Activated T-helper 2 cell treated with anti-CD3 and anti-CD28 coated beads, Interferon-gamma antibody, Interleukin-2, Interleukin-4, amounts not matched to agents 10 μg/mL and 5 μg/mL and 100 μg/mL, durations not matched to agents 14 hours and 24 hours and 36 hours (primary cell): ENCODE measurements at regions of chr7 and their contacts with region 1.

Region 1: GRCh38 chr7:92731335-92732063 is 104.9 kb downstream of the CDK6 start:
- DNase-seq: no peak
- H3K4me3 Mint-ChIP-seq: peak overlapping the region; percentile 34
- H3K27ac Mint-ChIP-seq: peak overlapping the region; percentile 96
- H3K4me1 Mint-ChIP-seq: peaks cover 74% of the 10 kb centered on the region
- H3K27me3 Mint-ChIP-seq: no peaks in the 10 kb centered on the region

Region 2: GRCh38 chr7:92528188-92528957 is 203.1 kb before region 1 on chr7 and contains the starts of genes PEX1 and RBM48:
- intact Hi-C with region 1: loop called (anchors 1 kb)
- DNase-seq: peak; percentile 96
- H3K4me3 Mint-ChIP-seq: peak within 1 kb of the TSS; percentile 92
- H3K27ac Mint-ChIP-seq: peak within 1 kb of the TSS; percentile 95
- H3K4me1 Mint-ChIP-seq: peaks cover 20% of the 10 kb centered on the region
- H3K27me3 Mint-ChIP-seq: no peaks in the 10 kb centered on the region
- total RNA-seq, gene PEX1: 15.1 TPM in 2 replicates
- total RNA-seq, gene RBM48: 15.2 and 16.8 TPM in 2 replicates

Region 3: GRCh38 chr7:92584996-92585395 is 146.5 kb before region 1 on chr7:
- intact Hi-C with region 1: no loop called
- DNase-seq: no peak
- H3K4me3 Mint-ChIP-seq: no peak overlapping the region
- H3K27ac Mint-ChIP-seq: no peak overlapping the region
- H3K4me1 Mint-ChIP-seq: peaks cover 41% of the 10 kb centered on the region
- H3K27me3 Mint-ChIP-seq: no peaks in the 10 kb centered on the region

Region 4: GRCh38 chr7:92633211-92633906 is 98.1 kb before region 1 on chr7:
- intact Hi-C with region 1: loop called (anchors 1 kb)
- DNase-seq: no peak
- H3K4me3 Mint-ChIP-seq: peak overlapping the region; percentile 43
- H3K27ac Mint-ChIP-seq: peak overlapping the region; percentile 96
- H3K4me1 Mint-ChIP-seq: peaks cover 70% of the 10 kb centered on the region
- H3K27me3 Mint-ChIP-seq: no peaks in the 10 kb centered on the region

Region 5: GRCh38 chr7:92682903-92683539 is 48.5 kb before region 1 on chr7:
- intact Hi-C with region 1: loop called (anchors 1 kb)
- DNase-seq: no peak
- H3K4me3 Mint-ChIP-seq: peak overlapping the region; percentile 60
- H3K27ac Mint-ChIP-seq: peak overlapping the region; percentile 93
- H3K4me1 Mint-ChIP-seq: peaks cover 84% of the 10 kb centered on the region
- H3K27me3 Mint-ChIP-seq: no peaks in the 10 kb centered on the region

Region 6: GRCh38 chr7:92717993-92718716 is 13.3 kb before region 1 on chr7:
- intact Hi-C with region 1: loop called (anchors 1 kb)
- DNase-seq: peak; percentile 71
- H3K4me3 Mint-ChIP-seq: peak overlapping the region; percentile 80
- H3K27ac Mint-ChIP-seq: peak overlapping the region; percentile 97
- H3K4me1 Mint-ChIP-seq: peaks cover 66% of the 10 kb centered on the region
- H3K27me3 Mint-ChIP-seq: no peaks in the 10 kb centered on the region

Region 7: DNA sequence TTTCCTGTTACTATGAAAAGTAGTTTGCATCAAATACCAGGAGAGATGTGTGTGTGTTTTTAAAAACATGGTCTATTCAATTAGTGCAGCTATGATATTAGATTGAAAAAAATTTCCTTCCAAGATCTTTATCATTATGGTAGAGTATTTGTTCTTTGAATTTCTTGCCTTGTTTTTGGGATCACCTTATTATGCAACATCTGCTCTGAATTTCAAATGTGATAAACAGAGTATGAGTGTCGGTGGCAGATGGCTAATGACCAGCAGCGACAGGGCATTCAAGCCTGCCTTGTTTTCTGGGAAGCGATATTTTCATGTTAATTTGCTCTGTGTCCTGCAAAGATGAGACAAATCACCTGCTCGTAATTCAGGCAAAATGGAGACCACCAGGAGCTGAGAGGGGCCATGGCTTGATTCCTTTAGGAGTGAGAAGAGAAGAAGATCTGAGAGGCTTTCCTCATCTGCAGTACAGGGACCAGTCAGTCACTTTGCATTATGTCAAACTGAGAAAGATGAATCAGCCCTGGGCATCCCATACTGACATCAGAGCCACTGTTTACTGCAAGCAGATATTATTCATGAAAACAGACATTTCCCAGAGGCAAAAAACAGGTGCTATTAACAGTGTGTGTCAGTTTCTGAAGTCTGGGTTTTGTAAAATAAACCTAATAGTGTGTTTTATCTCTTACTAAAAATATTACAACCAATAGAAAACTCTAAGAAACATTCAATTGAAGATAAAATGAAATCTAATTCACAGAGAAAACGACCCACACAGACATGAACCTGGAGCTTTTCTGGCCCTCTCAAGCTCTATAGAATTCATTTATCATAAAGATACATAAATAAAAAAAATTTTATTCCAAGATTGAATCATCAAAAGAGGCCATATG is 37.2 kb after region 1 on chr7:
- intact Hi-C with region 1: loop called (anchors 1 kb)
- DNase-seq: no peak
- H3K4me3 Mint-ChIP-seq: peak overlapping the region; percentile 11
- H3K27ac Mint-ChIP-seq: peak overlapping the region; percentile 83
- H3K4me1 Mint-ChIP-seq: peaks cover 64% of the 10 kb centered on the region
- H3K27me3 Mint-ChIP-seq: no peaks in the 10 kb centered on the region

Region 8: GRCh38 chr7:93117852-93118530 is 386.5 kb after region 1 on chr7 and contains the start of gene SAMD9:
- intact Hi-C with region 1: loop called (anchors 5 kb)
- DNase-seq: peak; percentile 58
- H3K4me3 Mint-ChIP-seq: peak within 1 kb of the TSS; percentile 85
- H3K27ac Mint-ChIP-seq: peak within 1 kb of the TSS; percentile 90
- H3K4me1 Mint-ChIP-seq: peaks cover 38% of the 10 kb centered on the region
- H3K27me3 Mint-ChIP-seq: no peaks in the 10 kb centered on the region
- total RNA-seq, gene SAMD9: 9.3 and 9.4 TPM in 2 replicates